HepG2 (cell line): ENCODE measurements at regions of chr16 and their contacts with region 1.

Region 1: GRCh38 chr16:8634991-8635736 is 13.7 kb downstream of the METTL22 start:
- DNase-seq: peak; percentile 66
- ATAC-seq: peak; percentile 83
- H3K4me3 ChIP-seq: no peak overlapping the region
- H3K27ac ChIP-seq: no peak overlapping the region
- H3K4me1 ChIP-seq: peaks cover 12% of the 10 kb centered on the region
- H3K27me3 ChIP-seq: no peaks in the 10 kb centered on the region
- CTCF ChIP-seq: peak; percentile 71
- EP300 ChIP-seq: no peak
- POLR2A ChIP-seq: no peak
- RAD21 ChIP-seq: peak; percentile 86

Region 2: GRCh38 chr16:8342276-8342675 is 292.9 kb before region 1 on chr16:
- CTCF ChIA-PET with region 1: no interaction called
- POLR2A ChIA-PET with region 1: no interaction called
- in situ Hi-C with region 1: no loop called
- intact Hi-C with region 1: loop called (anchors 5 kb)
- DNase-seq: no peak
- ATAC-seq: no peak
- H3K4me3 ChIP-seq: no peak overlapping the region
- H3K27ac ChIP-seq: no peak overlapping the region
- H3K4me1 ChIP-seq: no peaks in the 10 kb centered on the region
- H3K27me3 ChIP-seq: peaks cover 0 to 7% of the 10 kb centered on the region in 2 experiments; a peak in 1 of 5 replicates
- CTCF ChIP-seq: no peak
- EP300 ChIP-seq: no peak
- POLR2A ChIP-seq: no peak
- RAD21 ChIP-seq: no peak

Region 3: DNA sequence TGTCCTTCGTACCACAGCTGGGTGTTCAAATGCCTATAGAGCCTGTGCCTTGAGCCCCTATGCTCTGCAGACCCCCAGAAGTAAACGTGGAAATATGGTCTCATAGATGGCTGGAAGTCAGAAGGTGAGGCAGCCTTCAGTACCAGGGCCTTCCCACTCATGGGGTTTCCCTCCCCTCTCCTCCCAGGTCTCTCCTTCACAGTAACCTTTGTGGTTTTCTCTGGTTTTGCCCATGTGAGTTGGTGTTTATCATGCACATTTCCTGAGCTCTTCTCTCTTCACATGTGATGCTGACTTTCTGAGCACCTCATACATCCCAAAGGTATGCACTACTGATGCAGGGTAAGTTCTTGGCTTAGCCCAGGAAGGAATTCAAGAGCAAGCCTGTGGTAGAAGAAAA is 80.3 kb before region 1 on chr16:
- CTCF ChIA-PET with region 1: no interaction called
- POLR2A ChIA-PET with region 1: no interaction called
- in situ Hi-C with region 1: no loop called
- intact Hi-C with region 1: no loop called
- DNase-seq: no peak
- ATAC-seq: no peak
- H3K4me3 ChIP-seq: no peak overlapping the region
- H3K27ac ChIP-seq: no peak overlapping the region
- H3K4me1 ChIP-seq: peaks cover 61% of the 10 kb centered on the region
- H3K27me3 ChIP-seq: peaks cover 13 to 50% of the 10 kb centered on the region in 2 experiments; a peak in 4 of 5 replicates
- CTCF ChIP-seq: no peak
- EP300 ChIP-seq: no peak
- POLR2A ChIP-seq: no peak
- RAD21 ChIP-seq: no peak

Region 4: GRCh38 chr16:8572919-8573724 is 62.0 kb before region 1 on chr16:
- CTCF ChIA-PET with region 1: interaction called, 66 read pairs
- POLR2A ChIA-PET with region 1: no interaction called
- in situ Hi-C with region 1: no loop called
- intact Hi-C with region 1: loop called (anchors 1 kb)
- DNase-seq: peak; percentile 61
- ATAC-seq: peak; percentile 25
- H3K4me3 ChIP-seq: peak overlapping the region in 2 of 3 experiments; percentile 20 to 28; a peak in 3 of 6 replicates
- H3K27ac ChIP-seq: no peak overlapping the region
- H3K4me1 ChIP-seq: peaks cover 76% of the 10 kb centered on the region
- H3K27me3 ChIP-seq: peaks cover 0 to 18% of the 10 kb centered on the region in 2 experiments; a peak in 1 of 5 replicates
- CTCF ChIP-seq: peak; percentile 88
- EP300 ChIP-seq: 0 out of 4 replicates have a peak, but pooled peaks of 1 of the 2 experiments have one; percentile 41
- POLR2A ChIP-seq: no peak
- RAD21 ChIP-seq: peak; percentile 76; the same call in 1 of the 2 replicates